Mammary epithelial cell (primary cell): ENCODE measurements at regions of chr16 and their contacts with region 1.

Region 1: DNA sequence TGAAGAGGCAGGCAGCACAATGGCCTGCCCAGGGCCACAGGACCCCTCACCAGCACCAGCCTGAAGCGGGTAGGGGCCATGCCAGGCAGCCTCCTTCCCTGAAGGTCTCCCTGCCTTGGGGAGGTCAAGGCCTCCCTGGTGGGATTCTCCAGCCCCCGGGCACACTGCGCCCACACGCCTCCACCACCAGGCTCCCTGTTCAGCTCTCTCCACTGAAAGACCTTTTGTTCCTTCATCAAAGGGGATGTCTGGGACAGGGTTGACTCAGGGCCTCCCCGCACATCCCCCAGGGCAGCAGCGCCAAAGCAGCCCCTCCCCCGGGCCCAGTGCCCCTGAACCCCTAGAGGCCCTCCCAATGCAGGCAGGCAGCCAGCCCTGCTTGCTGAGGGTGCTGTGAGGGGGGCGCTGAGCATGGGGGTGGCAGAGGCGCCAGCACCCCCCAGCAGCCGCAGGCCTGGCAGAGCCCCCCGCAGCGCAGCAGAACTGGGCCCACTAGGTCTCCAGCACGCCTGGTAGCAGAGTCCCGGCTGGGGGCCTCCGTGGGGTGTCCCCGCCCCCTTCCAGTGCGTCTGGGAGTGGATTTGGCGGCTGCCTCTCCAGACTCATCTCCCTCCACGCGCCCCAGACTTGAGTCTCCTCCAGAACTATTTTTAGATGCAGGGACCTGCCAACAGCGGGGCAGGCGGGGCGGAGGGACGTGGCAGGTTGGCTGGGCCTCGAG is 13.1 kb downstream of the BCAR1 start:
- DNase-seq: no peak
- H3K4me3 ChIP-seq: no peak overlapping the region
- H3K27ac ChIP-seq: peak overlapping the region; percentile 10
- H3K4me1 ChIP-seq: peaks cover 57% of the 10 kb centered on the region
- H3K27me3 ChIP-seq: no peaks in the 10 kb centered on the region
- CTCF ChIP-seq: no peak

Region 2: GRCh38 chr16:75288596-75289120 is 50.4 kb after region 1 on chr16:
- CTCF ChIA-PET with region 1: no interaction called
- dilution Hi-C with region 1: loop called (anchors 10 kb)
- in situ Hi-C with region 1: no loop called
- intact Hi-C with region 1: no loop called
- DNase-seq: no peak
- H3K4me3 ChIP-seq: no peak overlapping the region
- H3K27ac ChIP-seq: no peak overlapping the region
- H3K4me1 ChIP-seq: peaks cover 20% of the 10 kb centered on the region
- H3K27me3 ChIP-seq: no peaks in the 10 kb centered on the region
- CTCF ChIP-seq: no peak

Region 3: GRCh38 chr16:75379911-75380847 is 141.9 kb after region 1 on chr16:
- CTCF ChIA-PET with region 1: interaction called, 24 read pairs
- dilution Hi-C with region 1: loop called (anchors 5 kb)
- in situ Hi-C with region 1: no loop called
- intact Hi-C with region 1: loop called (anchors 1 kb)
- DNase-seq: no peak
- H3K4me3 ChIP-seq: no peak overlapping the region
- H3K27ac ChIP-seq: no peak overlapping the region
- H3K4me1 ChIP-seq: peaks cover 46% of the 10 kb centered on the region
- H3K27me3 ChIP-seq: no peaks in the 10 kb centered on the region
- CTCF ChIP-seq: no peak

Region 4: GRCh38 chr16:75385507-75386152 is 147.3 kb after region 1 on chr16:
- CTCF ChIA-PET with region 1: interaction called, 9 read pairs
- dilution Hi-C with region 1: loop called (anchors 5 kb)
- in situ Hi-C with region 1: no loop called
- intact Hi-C with region 1: loop called (anchors 1 kb)
- DNase-seq: peak; percentile 59
- H3K4me3 ChIP-seq: no peak overlapping the region
- H3K27ac ChIP-seq: peak overlapping the region; percentile 60
- H3K4me1 ChIP-seq: peaks cover 16% of the 10 kb centered on the region
- H3K27me3 ChIP-seq: no peaks in the 10 kb centered on the region
- CTCF ChIP-seq: peak; percentile 46 to 50

Region 5: DNA sequence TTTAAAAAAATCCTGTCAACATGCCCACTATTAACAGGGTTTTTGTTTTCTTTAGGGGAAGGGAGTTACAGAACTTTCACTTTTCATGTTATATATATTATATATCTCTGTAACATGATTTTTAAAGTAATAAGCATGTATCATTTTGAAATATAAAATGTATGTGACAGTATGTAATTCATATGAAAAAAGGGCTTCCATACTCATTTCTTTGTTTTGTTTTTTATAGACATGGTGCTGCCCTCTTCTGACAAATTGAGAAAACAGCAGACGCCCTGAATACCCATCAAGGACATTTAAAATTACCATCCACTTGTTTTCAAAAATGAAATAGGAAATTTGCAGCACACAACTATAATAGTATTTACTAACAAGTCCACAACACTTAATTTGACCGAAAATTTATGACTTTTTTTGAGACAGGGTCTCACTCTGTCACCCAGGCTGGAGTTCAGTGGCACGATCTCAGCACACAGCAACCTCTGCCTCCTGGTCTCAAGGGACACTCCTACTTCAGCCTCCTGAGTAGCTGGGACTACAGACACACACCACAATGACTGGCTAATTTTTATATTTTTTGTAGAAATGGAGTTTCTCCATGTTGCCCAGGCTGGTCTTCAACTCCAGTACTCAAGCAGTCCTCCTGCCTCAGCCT is 164.7 kb after region 1 on chr16:
- CTCF ChIA-PET with region 1: no interaction called
- dilution Hi-C with region 1: no loop called
- in situ Hi-C with region 1: no loop called
- intact Hi-C with region 1: loop called (anchors 2 kb)
- DNase-seq: peak; percentile 14
- H3K4me3 ChIP-seq: no peak overlapping the region
- H3K27ac ChIP-seq: no peak overlapping the region
- H3K4me1 ChIP-seq: peaks cover 2% of the 10 kb centered on the region
- H3K27me3 ChIP-seq: no peaks in the 10 kb centered on the region
- CTCF ChIP-seq: peak; percentile 59 to 62